PC-3 (cell line): ENCODE measurements at regions of chr7 and their contacts with region 1.

Region 1: DNA sequence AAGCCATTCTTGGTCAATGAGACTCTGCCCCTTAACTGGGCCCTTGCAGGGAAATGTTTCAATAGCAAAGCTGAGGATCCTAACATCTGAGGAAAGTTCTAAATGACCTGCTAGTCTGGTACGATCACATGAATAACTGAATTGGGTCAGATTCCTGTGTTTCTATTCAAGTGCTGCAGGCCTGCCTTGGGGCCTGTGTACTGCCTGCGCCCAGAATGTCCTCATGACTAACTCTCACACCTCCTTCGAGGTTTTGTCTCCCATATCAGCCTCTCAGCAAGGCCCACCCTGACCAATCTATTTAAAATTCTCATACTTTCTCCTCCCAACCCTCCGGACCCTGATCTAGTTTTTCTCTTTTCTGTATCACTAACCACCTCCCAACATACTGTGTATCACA is 4.4 kb downstream of the JAZF1 start:
- DNase-seq: no peak
- ATAC-seq: no peak
- H3K4me3 ChIP-seq: no peak overlapping the region
- H3K27ac ChIP-seq: no peak overlapping the region
- H3K4me1 ChIP-seq: peaks cover 12% of the 10 kb centered on the region
- H3K27me3 ChIP-seq: no peaks in the 10 kb centered on the region
- CTCF ChIP-seq: no peak

Region 2: DNA sequence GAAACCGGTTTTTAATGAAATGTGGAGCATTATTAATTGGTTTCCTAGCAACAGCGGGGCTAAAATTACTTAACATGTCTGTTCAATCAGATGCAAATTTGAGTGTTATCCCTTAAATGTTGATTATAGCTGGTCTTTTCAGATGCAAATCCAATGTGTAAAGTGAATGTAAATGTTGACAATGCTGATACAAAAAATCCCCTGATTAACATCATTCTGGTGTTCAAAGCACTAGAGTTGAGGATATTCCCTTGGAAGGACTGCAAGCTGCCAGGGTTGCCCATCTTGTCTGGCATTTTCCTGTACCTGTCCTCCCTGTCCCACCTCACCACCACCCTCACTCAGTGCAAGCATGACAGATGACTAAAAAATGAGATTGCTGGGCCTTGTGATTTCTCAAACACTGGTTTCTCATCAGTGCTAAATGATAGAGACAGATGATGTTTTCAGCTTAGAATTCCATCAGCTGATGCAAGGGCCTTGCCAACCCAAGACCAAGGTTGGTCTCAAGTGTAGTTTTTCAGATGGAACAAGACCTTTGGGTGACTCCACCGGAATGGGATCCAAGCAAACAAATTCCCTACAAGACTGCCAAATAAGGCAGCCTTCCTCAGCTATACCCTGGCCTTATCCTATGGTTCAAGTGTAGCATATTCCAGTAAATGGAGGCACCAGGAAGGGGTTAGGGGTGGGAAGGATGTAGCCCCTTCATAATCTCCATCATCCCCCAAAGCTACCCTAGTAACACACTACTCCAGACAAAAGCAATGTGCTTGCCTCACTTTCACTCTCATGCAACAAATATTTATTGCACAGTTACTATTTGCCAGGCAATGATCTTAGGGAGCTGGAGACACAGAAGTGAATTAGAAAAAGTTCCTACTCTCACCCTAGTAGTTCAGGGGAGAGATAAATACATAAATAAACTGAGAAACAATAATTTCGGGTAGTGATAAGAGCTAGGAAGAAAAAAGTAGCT is 50.5 kb before region 1 on chr7:
- CTCF ChIA-PET with region 1: no interaction called
- POLR2A ChIA-PET with region 1: no interaction called
- intact Hi-C with region 1: loop called (anchors 2 kb)
- DNase-seq: no peak
- ATAC-seq: no peak
- H3K4me3 ChIP-seq: no peak overlapping the region
- H3K27ac ChIP-seq: no peak overlapping the region
- H3K4me1 ChIP-seq: no peaks in the 10 kb centered on the region
- H3K27me3 ChIP-seq: no peaks in the 10 kb centered on the region
- CTCF ChIP-seq: no peak